Activated T-helper 1 cell treated with anti-CD3 and anti-CD28 coated beads, Interleukin-12 subunit alpha, Interleukin-12 subunit beta, Interleukin-2, Interleukin-4 antibody, amounts not matched to agents 30 ng/mL and 10 ng/mL and 1 ng/mL, durations not matched to agents 14 hours and 24 hours and 36 hours (primary cell): ENCODE measurements at regions of chr5 and their contacts with region 1.

Region 1: GRCh38 chr5:81851481-81852178 is 100.7 kb upstream of the SSBP2 start:
- DNase-seq: peak; percentile 87
- H3K4me3 Mint-ChIP-seq: peak overlapping the region; percentile 94
- H3K27ac Mint-ChIP-seq: peak overlapping the region; percentile 96
- H3K4me1 Mint-ChIP-seq: peaks cover 41% of the 10 kb centered on the region
- H3K27me3 Mint-ChIP-seq: peaks cover 1% of the 10 kb centered on the region

Region 2: DNA sequence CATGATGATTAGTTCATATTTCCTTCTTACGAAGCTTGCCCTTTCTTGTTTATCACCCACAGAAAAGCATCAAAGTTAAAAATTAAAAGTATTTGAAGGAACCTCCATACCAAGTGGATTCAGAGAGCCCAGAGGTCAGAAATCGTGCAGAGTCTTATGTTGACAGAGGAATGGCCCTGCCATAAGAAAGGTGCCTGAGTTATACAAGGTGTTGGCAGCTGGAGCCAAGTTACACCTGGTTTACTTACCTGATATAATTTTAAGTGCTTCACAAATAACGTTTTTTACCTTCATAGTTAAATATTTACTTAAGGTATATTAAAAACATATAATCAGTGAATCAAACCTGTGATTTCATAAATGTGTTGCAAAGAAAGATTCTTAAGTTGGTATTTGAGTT is 1154.5 kb before region 1 on chr5:
- intact Hi-C with region 1: no loop called
- DNase-seq: no peak
- H3K4me3 Mint-ChIP-seq: no peak overlapping the region
- H3K27ac Mint-ChIP-seq: no peak overlapping the region
- H3K4me1 Mint-ChIP-seq: peaks cover 15% of the 10 kb centered on the region
- H3K27me3 Mint-ChIP-seq: no peaks in the 10 kb centered on the region

Region 3: DNA sequence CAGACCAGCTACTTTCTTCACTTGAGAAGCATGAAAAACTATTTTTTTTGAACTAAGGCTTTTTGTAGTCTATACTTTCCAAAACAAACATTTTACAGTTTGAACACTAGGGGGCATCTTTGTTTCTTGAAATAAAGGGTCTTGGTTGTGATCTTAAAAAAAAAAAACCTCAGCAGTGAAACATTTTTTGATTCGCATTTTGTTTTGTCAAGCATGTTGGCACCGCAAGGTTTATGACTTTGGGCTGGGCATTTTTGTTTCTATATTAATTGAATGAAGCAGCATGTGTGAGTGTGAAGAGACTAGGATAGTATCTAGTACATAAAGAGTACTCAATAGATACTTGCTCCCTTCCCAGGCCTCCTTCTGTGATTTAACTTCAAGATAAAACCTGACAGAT is 426.1 kb before region 1 on chr5:
- intact Hi-C with region 1: loop called (anchors 5 kb)
- DNase-seq: no peak
- H3K4me3 Mint-ChIP-seq: no peak overlapping the region
- H3K27ac Mint-ChIP-seq: no peak overlapping the region
- H3K4me1 Mint-ChIP-seq: peaks cover 34% of the 10 kb centered on the region
- H3K27me3 Mint-ChIP-seq: no peaks in the 10 kb centered on the region

Region 4: DNA sequence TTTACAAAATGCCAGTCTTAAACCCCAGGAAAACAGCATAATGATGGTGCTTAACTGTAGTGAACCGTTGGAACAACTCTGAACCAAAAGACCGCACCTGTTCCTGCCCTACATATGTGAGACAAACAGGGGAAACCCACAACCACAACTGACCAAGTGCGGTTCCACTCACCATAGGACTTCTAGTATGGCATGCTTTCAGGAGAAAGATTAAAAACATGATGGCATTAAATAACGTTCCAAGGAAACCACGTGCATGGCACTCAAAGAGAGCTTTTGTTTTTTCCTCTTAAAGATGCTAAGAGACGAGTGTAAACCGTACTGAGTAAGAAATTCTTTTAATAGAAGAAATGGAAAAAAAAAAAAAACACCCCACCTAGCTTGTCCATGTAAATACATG is 220.5 kb before region 1 on chr5:
- intact Hi-C with region 1: loop called (anchors 10 kb)
- DNase-seq: peak; percentile 16
- H3K4me3 Mint-ChIP-seq: peak overlapping the region; percentile 15
- H3K27ac Mint-ChIP-seq: peak overlapping the region; percentile 13
- H3K4me1 Mint-ChIP-seq: peaks cover 7% of the 10 kb centered on the region
- H3K27me3 Mint-ChIP-seq: no peaks in the 10 kb centered on the region

Region 5: GRCh38 chr5:81779125-81779915 is 72.3 kb before region 1 on chr5:
- intact Hi-C with region 1: loop called (anchors 1 kb)
- DNase-seq: peak; percentile 16
- H3K4me3 Mint-ChIP-seq: peak overlapping the region; percentile 78
- H3K27ac Mint-ChIP-seq: peak overlapping the region; percentile 63
- H3K4me1 Mint-ChIP-seq: peaks cover 27% of the 10 kb centered on the region
- H3K27me3 Mint-ChIP-seq: peaks cover 2% of the 10 kb centered on the region

Region 6: GRCh38 chr5:82225525-82226172 is 374.0 kb after region 1 on chr5:
- intact Hi-C with region 1: loop called (anchors 1 kb)
- DNase-seq: peak; percentile 55
- H3K4me3 Mint-ChIP-seq: no peak overlapping the region
- H3K27ac Mint-ChIP-seq: no peak overlapping the region
- H3K4me1 Mint-ChIP-seq: no peaks in the 10 kb centered on the region
- H3K27me3 Mint-ChIP-seq: no peaks in the 10 kb centered on the region

Region 7: GRCh38 chr5:82894716-82895115 is 1043.1 kb after region 1 on chr5:
- intact Hi-C with region 1: no loop called
- DNase-seq: no peak
- H3K4me3 Mint-ChIP-seq: no peak overlapping the region
- H3K27ac Mint-ChIP-seq: no peak overlapping the region
- H3K4me1 Mint-ChIP-seq: no peaks in the 10 kb centered on the region
- H3K27me3 Mint-ChIP-seq: peaks cover 3% of the 10 kb centered on the region

Region 8: GRCh38 chr5:83076742-83077661 is 1225.4 kb after region 1 on chr5 and contains the starts of genes TMEM167A and XRCC4:
- intact Hi-C with region 1: loop called (anchors 5 kb)
- DNase-seq: peak; percentile 93
- H3K4me3 Mint-ChIP-seq: peak within 1 kb of the TSS; percentile 100
- H3K27ac Mint-ChIP-seq: peak within 1 kb of the TSS; percentile 99
- H3K4me1 Mint-ChIP-seq: peaks cover 43% of the 10 kb centered on the region
- H3K27me3 Mint-ChIP-seq: no peaks in the 10 kb centered on the region
- total RNA-seq, gene TMEM167A: 84.6 and 96.2 TPM in 2 replicates
- total RNA-seq, gene XRCC4: 10.2 and 11.2 TPM in 2 replicates